Heart left ventricle (tissue), 16 donors: ENCODE measurements at regions of chr17 and their contacts with region 1.

Region 1: GRCh38 chr17:32265192-32265923 is at the start of gene RHBDL3:
- DNase-seq: peak in 2 of 5 donors; percentile 50 to 57
- ATAC-seq: peak in 3 of 4 donors; percentile 18 to 46 (median 25)
- H3K4me3 ChIP-seq: peak within 1 kb of the TSS; percentile 54 to 81 (median 62)
- H3K27ac ChIP-seq: peak within 1 kb of the TSS in 2 of 12 donors; percentile 34 to 51
- H3K4me1 ChIP-seq: peaks cover 0 to 38% (median 16%) of the 10 kb centered on the region in 12 donors
- H3K27me3 ChIP-seq: peaks cover 0 to 74% (median 24%) of the 10 kb centered on the region in 9 donors
- CTCF ChIP-seq: no peak
- POLR2A ChIP-seq: no peak
- total RNA-seq, gene RHBDL3: 0.05 to 3.8 (median 0.36) TPM

Region 2: GRCh38 chr17:31931756-31932155 is 333.6 kb before region 1 on chr17:
- intact Hi-C with region 1: no loop called
- DNase-seq: no peak
- ATAC-seq: no peak
- H3K4me3 ChIP-seq: no peak overlapping the region
- H3K27ac ChIP-seq: no peak overlapping the region
- H3K4me1 ChIP-seq: peaks cover 0 to 6% (median 0%) of the 10 kb centered on the region in 12 donors
- H3K27me3 ChIP-seq: no peaks in the 10 kb centered on the region
- CTCF ChIP-seq: no peak
- POLR2A ChIP-seq: no peak

Region 3: DNA sequence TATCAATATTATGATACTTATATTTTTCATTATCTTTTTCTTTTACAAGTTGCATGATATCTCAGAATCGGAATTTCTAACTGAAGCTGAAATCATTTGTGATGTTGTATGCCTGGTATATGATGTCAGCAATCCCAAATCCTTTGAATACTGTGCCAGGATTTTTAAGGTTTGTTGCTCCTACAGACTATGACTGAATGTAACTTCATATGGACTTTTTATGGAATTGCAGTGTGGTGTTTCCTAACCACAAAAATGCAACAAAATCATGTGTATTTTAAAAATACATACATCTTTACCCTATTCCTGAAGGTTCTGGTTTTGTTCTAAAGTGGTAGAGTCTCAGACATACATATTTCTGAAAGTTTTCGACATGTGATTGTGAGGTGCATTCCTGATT is 58.5 kb before region 1 on chr17:
- intact Hi-C with region 1: loop called in 1 of 10 experiments (anchors 10 kb)
- DNase-seq: no peak
- ATAC-seq: no peak
- H3K4me3 ChIP-seq: no peak overlapping the region
- H3K27ac ChIP-seq: no peak overlapping the region
- H3K4me1 ChIP-seq: no peaks in the 10 kb centered on the region
- H3K27me3 ChIP-seq: no peaks in the 10 kb centered on the region
- CTCF ChIP-seq: no peak
- POLR2A ChIP-seq: no peak

Region 4: DNA sequence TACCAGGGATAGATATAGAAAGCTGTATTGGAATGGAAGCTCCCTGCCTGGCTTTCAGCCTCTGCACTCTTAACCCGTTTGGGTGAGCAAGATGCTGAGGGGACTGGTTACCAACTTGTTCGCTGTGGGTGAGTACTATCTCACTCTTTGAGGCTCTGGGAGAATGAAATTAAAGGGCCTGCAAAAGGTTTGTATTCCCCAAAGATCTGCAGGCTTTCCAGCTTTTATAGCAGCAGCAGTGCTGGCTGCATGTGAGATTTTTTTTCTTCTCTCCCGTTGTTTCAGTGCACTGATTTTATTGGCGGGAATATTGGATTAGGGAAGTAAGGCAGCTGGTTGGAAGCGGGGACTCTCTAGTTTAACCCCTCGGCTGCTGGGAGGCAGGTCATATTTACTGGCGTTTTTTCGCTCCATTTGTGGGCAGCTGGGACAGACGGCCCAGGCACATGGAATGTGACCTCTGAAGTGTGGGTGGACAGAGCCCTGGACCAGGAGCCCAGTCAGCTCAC is 45.7 kb after region 1 on chr17:
- intact Hi-C with region 1: loop called in 1 of 10 experiments (anchors 2 kb)
- DNase-seq: no peak
- ATAC-seq: peak in 1 of 4 donors; percentile 37
- H3K4me3 ChIP-seq: peak overlapping the region in 6 of 12 donors; percentile 1 to 48 (median 28)
- H3K27ac ChIP-seq: no peak overlapping the region
- H3K4me1 ChIP-seq: peaks cover 0 to 8% (median 0%) of the 10 kb centered on the region in 12 donors
- H3K27me3 ChIP-seq: peaks cover 0 to 9% (median 0%) of the 10 kb centered on the region in 9 donors
- CTCF ChIP-seq: no peak
- POLR2A ChIP-seq: no peak

Region 5: DNA sequence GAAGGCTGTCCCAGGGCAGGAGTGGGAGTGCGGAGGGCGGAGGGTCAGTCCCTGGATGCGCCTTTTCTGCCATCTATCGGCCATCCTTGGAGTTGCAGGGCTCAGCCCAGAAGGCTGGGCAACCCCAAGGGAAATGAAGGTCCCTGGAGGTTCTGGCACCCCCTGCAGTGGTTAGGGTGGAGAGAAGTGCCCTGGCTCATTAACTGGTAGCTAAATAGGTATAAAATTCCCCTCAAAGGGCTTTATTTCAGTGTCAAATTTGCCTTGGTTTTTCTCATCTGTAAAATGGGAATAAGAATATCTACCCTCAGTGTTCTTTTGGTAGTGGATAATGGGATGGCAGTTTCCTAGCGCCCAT is 54.2 kb after region 1 on chr17:
- intact Hi-C with region 1: loop called in 1 of 10 experiments (anchors 2 kb)
- DNase-seq: peak; percentile 70 to 86 (median 77)
- ATAC-seq: peak; percentile 76 to 96 (median 90)
- H3K4me3 ChIP-seq: peak overlapping the region in 2 of 12 donors; percentile 12 to 42
- H3K27ac ChIP-seq: no peak overlapping the region
- H3K4me1 ChIP-seq: peaks cover 0 to 12% (median 0%) of the 10 kb centered on the region in 12 donors
- H3K27me3 ChIP-seq: peaks cover 0 to 4% (median 0%) of the 10 kb centered on the region in 9 donors
- CTCF ChIP-seq: peak; percentile 84 to 96 (median 94)
- POLR2A ChIP-seq: no peak